ENCODE measurements at regions of chr11 and their contacts with region 1.

Region 1: GRCh38 chr11:108467091-108467823 is at the start of gene C11orf65:
- DNase-seq: peak; percentile 95 to 96
- ATAC-seq: peak; percentile 99 to 100
- H3K4me3 ChIP-seq: peak within 1 kb of the TSS; percentile 66 to 88 (median 79)
- H3K27ac ChIP-seq: peak within 1 kb of the TSS; percentile 92 to 98 (median 96)
- H3K4me1 ChIP-seq: peaks cover 3 to 8% of the 10 kb centered on the region in 2 donors
- H3K27me3 ChIP-seq: no peaks in the 10 kb centered on the region
- CTCF ChIP-seq: no peak
- POLR2A ChIP-seq: peak; percentile 88 to 94
- total RNA-seq, gene C11orf65: 0.51 TPM in 1 of 4 donors, not detected in the others

Region 2: GRCh38 chr11:107457558-107458271 is 1009.5 kb before region 1 on chr11 and contains the start of gene CWF19L2:
- in situ Hi-C with region 1: no loop called
- intact Hi-C with region 1: loop called (anchors 5 kb)
- DNase-seq: peak; percentile 77 to 87
- ATAC-seq: peak; percentile 100
- H3K4me3 ChIP-seq: peak within 1 kb of the TSS; percentile 76 to 92 (median 82)
- H3K27ac ChIP-seq: peak within 1 kb of the TSS; percentile 78 to 85 (median 80)
- H3K4me1 ChIP-seq: peaks cover 13 to 17% of the 10 kb centered on the region in 2 donors
- H3K27me3 ChIP-seq: no peaks in the 10 kb centered on the region
- CTCF ChIP-seq: peak in 1 of 5 experiments; percentile 11
- POLR2A ChIP-seq: no peak
- total RNA-seq, gene CWF19L2: 6.5 to 17.4 (median 9.8) TPM

Region 3: DNA sequence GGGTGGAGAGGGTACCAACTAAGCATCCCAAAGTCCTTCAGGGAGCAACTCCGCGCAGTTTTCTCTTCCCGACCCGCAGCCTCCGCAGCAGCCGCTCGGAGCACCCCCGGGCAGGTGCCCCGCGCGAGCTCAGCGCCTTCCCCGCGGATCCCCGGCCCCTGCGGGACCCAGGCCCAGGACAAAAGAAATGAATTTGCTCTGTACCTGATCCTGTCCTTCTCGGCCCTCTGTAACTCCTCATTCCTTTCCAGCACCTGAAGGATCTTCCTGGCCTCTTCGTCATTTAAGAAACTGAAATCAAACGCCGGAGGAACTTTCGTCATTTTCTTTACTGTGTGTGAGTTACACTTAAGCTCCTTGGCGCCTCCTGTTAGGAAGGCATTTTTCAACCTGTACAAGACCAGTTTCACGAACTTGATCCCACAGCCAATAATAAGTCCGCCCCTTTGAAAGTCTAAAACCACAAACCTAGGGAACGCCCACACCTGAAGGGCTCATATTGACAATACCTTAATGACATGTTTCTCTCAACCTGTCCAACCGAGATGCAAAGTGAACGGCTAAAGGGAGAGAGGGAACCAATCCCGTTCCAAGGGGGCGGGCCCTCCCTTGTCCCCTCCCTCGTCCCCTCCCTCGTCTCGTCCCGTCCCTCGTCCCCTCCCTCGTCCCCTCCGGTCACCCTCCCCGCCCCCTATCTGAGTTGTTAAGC is 126.1 kb after region 1 on chr11 and contains the start of gene EXPH5:
- in situ Hi-C with region 1: no loop called
- intact Hi-C with region 1: loop called (anchors 2 kb)
- DNase-seq: peak; percentile 58
- ATAC-seq: peak; percentile 80 to 90
- H3K4me3 ChIP-seq: peak within 1 kb of the TSS; percentile 61 to 71 (median 66)
- H3K27ac ChIP-seq: no peak within 1 kb of the TSS
- H3K4me1 ChIP-seq: peaks cover 3 to 10% of the 10 kb centered on the region in 2 donors
- H3K27me3 ChIP-seq: peaks cover 2 to 31% (median 12%) of the 10 kb centered on the region in 3 donors
- CTCF ChIP-seq: no peak
- POLR2A ChIP-seq: no peak
- total RNA-seq, gene EXPH5: 0.07 to 0.22 (median 0.20) TPM in 3 of 4 donors, not detected in the other

Region 4: DNA sequence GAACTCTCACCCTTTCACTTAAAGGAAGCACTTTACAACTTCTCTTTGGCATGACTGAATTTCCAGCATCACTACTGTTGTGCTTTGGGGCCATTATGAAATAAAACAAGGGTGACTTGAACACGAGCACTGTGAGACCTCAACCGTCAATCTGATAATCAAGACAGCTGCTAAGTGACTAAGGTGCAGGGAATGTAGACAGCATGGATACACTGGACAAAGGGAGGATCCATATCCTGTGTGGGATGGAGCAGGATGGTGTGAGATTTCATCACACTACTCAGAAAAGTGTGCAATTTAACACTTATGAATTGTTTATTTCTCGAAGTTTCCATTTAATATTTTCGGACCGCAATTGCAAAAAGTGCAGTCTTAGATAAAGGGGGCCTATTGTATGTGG is 142.4 kb after region 1 on chr11:
- in situ Hi-C with region 1: no loop called
- intact Hi-C with region 1: no loop called
- DNase-seq: no peak
- ATAC-seq: no peak
- H3K4me3 ChIP-seq: no peak overlapping the region
- H3K27ac ChIP-seq: no peak overlapping the region
- H3K4me1 ChIP-seq: no peaks in the 10 kb centered on the region
- H3K27me3 ChIP-seq: no peaks in the 10 kb centered on the region
- CTCF ChIP-seq: no peak
- POLR2A ChIP-seq: no peak

Region 5: DNA sequence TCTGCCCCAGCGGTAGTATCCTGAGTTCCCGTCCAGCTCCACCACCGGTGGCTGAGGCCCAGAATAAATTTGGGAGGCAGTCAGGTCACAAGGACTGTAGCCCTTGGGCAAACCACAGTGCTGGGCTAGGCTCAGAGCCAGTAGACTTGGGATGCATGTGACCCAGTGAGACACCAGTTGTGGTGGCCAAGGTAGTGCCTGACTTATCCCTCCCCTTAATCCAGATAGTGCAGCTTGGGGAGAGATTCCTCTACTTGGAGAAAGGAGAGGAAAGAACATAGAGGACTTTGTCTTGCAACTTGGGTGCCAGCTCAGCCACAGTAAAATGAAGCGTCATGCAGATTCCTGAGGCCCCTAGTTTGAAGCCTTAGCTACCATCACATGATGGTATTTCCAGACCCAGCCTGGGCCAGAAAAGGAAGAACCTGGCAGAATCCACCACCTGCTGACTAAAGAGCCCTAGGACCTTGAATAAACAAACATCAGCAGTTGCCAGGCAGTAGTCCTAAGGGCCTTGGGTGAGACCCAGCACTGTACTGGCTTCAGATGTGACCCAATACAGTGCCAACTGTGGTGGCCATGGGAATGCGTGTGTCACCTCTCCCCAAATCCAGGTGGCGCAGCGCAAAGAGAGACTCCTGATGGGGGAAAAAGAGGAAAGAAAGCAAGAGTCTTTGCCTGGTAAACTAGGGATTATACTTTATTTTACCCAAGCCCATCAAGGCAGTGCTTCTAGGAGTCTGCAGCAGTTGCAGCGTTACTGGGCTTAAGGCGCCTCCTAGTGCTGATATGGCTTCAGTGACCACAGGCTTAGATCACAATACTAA is 180.7 kb after region 1 on chr11:
- in situ Hi-C with region 1: loop called in 1 of 4 experiments (anchors 25 kb)
- intact Hi-C with region 1: loop called (anchors 2 kb)
- DNase-seq: peak; percentile 29 to 68
- ATAC-seq: peak; percentile 84 to 85
- H3K4me3 ChIP-seq: no peak overlapping the region
- H3K27ac ChIP-seq: peak overlapping the region; percentile 13 to 67 (median 42)
- H3K4me1 ChIP-seq: peaks cover 0 to 6% of the 10 kb centered on the region in 2 donors
- H3K27me3 ChIP-seq: no peaks in the 10 kb centered on the region
- CTCF ChIP-seq: peak; percentile 46 to 63 (median 51)
- POLR2A ChIP-seq: no peak

Region 6: GRCh38 chr11:108664730-108665525 is 197.7 kb after region 1 on chr11 and contains the start of gene DDX10:
- in situ Hi-C with region 1: loop called in 1 of 4 experiments (anchors 25 kb)
- intact Hi-C with region 1: loop called (anchors 1 kb)
- DNase-seq: peak; percentile 98
- ATAC-seq: peak; percentile 98
- H3K4me3 ChIP-seq: peak within 1 kb of the TSS; percentile 67 to 88 (median 74)
- H3K27ac ChIP-seq: peak within 1 kb of the TSS; percentile 80 to 89 (median 82)
- H3K4me1 ChIP-seq: peaks cover 20 to 23% of the 10 kb centered on the region in 2 donors
- H3K27me3 ChIP-seq: no peaks in the 10 kb centered on the region
- CTCF ChIP-seq: peak in 3 of 5 experiments; percentile 8 to 26 (median 20)
- POLR2A ChIP-seq: peak; percentile 65 to 82
- total RNA-seq, gene DDX10: 5.0 to 15.0 (median 10.5) TPM